ENCODE measurements at regions of chr2 and their contacts with region 1.

Region 1: DNA sequence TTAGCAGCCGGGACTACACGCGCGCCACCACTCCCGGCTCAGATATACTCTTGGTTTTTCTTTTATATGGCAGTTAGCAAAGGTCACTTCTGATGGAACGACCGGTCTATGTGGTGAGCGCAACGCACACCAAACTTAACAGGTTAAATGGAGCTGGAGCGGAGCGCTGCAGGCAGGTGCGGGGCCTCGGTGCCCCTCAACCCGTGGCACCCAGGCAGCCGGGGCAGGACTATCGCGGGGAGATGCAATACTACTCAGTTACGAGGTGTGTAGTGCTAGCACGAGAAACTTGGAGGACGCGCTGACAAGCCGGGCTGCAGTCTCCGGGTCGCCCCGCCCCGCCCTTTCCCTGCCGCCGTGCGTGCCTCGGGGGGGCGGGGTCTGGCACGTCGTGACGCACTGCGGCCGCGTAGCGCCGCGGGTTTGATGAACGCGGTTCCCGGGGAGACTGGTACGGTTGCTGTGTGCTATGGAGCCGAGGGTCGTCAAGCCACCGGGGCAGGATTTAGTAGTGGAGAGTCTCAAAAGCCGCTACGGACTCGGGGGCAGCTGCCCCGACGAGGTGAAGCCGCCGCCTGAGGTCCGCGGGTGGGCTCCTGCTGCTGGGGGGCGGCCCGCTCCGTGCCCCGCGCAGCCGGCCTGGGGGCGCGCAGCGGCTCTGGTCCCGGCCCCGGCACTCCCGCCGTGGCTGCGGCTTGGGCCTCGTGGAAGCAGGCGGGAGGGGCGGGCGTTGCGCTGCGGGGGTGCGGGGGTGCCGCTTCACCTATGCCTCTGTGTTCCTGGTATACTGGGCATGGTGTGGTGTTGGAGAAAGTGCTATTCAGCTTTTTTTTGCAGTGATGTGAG is at the start of gene CCDC138:
- DNase-seq: peak; percentile 86 to 93 (median 91)
- ATAC-seq: peak; percentile 98
- H3K4me3 ChIP-seq: peak within 1 kb of the TSS; percentile 88
- H3K4me3 Mint-ChIP-seq: peak within 1 kb of the TSS; percentile 88 to 100 (median 97)
- H3K27ac ChIP-seq: peak within 1 kb of the TSS; percentile 90
- H3K27ac Mint-ChIP-seq: peak within 1 kb of the TSS; percentile 69 to 99 (median 97)
- H3K4me1 ChIP-seq: peaks cover 6 to 13% of the 10 kb centered on the region in 2 donors
- H3K4me1 Mint-ChIP-seq: peaks cover 6 to 21% (median 17%) of the 10 kb centered on the region in 7 donors
- H3K27me3 ChIP-seq: no peaks in the 10 kb centered on the region
- H3K27me3 Mint-ChIP-seq: no peaks in the 10 kb centered on the region
- total RNA-seq, gene CCDC138: 2.7 to 10.5 (median 7.5) TPM

Region 2: DNA sequence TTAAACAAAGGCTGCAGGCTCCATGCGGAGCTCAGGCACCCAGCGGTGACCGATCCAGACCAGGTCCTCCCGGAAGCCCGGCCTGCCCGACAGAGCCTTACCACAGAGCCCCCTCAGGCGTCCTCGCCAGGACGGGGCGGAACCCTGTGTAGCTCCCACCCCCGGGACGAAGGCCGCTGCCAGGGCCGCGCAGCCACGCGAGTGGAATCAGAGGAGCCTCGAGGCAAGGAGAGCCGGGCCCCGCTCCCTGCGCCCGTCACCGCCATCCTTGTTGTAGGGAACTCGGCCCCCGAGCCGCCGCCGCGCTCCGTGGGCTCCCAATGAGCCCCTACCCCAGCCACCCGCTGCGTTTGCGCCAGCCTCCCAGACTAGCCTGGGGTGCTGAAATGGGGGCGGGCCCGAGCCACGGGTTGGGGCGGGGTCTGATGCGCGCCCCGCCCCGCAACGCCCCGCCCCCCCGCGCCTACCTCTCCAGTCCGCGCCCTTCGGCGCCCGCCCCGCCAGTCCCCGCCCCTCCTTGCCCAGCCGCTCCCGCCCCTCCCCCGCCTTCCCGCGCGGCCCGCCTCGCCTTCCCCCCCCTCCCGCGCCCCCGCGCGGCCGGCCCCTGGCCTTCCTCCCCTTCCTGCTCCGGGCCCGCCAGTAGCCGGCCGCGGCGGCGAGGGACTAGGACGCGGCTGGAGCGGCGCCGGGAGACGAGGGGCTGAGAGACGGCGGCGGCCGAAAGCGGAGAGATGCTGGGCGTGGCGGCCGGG is 252.6 kb before region 1 on chr2 and contains the start of gene LIMS1:
- CTCF ChIA-PET with region 1: no interaction called
- POLR2A ChIA-PET with region 1: no interaction called
- intact Hi-C with region 1: loop called (anchors 2 to 5 kb)
- DNase-seq: peak; percentile 69 to 85 (median 79)
- ATAC-seq: peak; percentile 98
- H3K4me3 ChIP-seq: peak within 1 kb of the TSS; percentile 93
- H3K4me3 Mint-ChIP-seq: peak within 1 kb of the TSS; percentile 86 to 99 (median 95)
- H3K27ac ChIP-seq: peak within 1 kb of the TSS; percentile 76
- H3K27ac Mint-ChIP-seq: peak within 1 kb of the TSS; percentile 34 to 96 (median 89)
- H3K4me1 ChIP-seq: peaks cover 3 to 9% of the 10 kb centered on the region in 2 donors
- H3K4me1 Mint-ChIP-seq: peaks cover 20 to 59% (median 28%) of the 10 kb centered on the region in 7 donors
- H3K27me3 ChIP-seq: no peaks in the 10 kb centered on the region
- H3K27me3 Mint-ChIP-seq: no peaks in the 10 kb centered on the region
- total RNA-seq, gene LIMS1: 25.3 to 75.3 (median 49.9) TPM

Region 3: DNA sequence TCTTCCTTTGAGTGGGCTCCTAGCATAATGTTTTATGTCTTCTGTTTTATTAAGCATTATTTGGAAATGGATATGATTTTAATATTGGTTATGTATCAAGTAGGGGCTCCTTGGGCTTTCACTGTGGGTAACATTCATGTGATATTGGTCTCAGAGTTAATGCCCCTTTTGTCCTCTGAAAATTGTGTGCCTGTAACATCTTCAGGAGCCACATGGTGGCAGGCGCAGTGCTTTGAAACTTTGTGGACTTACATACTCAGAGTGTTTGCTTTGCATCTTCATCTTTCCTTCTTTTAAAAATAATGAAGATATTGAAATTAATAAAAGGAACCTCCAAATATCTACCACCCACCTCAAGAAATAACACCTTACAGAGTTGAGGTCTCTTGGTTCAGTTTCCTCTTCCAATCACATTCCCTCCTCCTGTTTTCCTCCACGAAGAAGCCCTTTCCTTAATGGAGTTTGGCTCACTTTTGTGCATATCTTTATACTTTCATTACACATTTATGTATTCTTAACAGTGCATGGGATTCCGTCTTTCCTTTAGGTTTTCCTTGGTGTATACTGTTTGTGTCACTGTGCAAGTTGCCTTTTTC is 178.8 kb before region 1 on chr2:
- CTCF ChIA-PET with region 1: interaction called, 5 read pairs
- POLR2A ChIA-PET with region 1: no interaction called
- intact Hi-C with region 1: loop called in 1 of 2 experiments (anchors 5 kb)
- DNase-seq: peak in 7 of 9 donors; percentile 30 to 61 (median 53)
- ATAC-seq: peak; percentile 45
- H3K4me3 ChIP-seq: no peak overlapping the region
- H3K4me3 Mint-ChIP-seq: no peak overlapping the region
- H3K27ac ChIP-seq: no peak overlapping the region
- H3K27ac Mint-ChIP-seq: no peak overlapping the region
- H3K4me1 ChIP-seq: peaks cover 4 to 14% of the 10 kb centered on the region in 2 donors
- H3K4me1 Mint-ChIP-seq: peaks cover 20 to 68% (median 26%) of the 10 kb centered on the region in 7 donors
- H3K27me3 ChIP-seq: no peaks in the 10 kb centered on the region
- H3K27me3 Mint-ChIP-seq: no peaks in the 10 kb centered on the region

Region 4: GRCh38 chr2:108621087-108621559 is 165.5 kb before region 1 on chr2:
- CTCF ChIA-PET with region 1: no interaction called
- POLR2A ChIA-PET with region 1: no interaction called
- intact Hi-C with region 1: loop called (anchors 5 kb)
- DNase-seq: peak; percentile 32 to 80 (median 75)
- ATAC-seq: peak; percentile 97
- H3K4me3 ChIP-seq: peak overlapping the region; percentile 59
- H3K4me3 Mint-ChIP-seq: peak overlapping the region; percentile 87 to 96 (median 91)
- H3K27ac ChIP-seq: peak overlapping the region; percentile 74
- H3K27ac Mint-ChIP-seq: peak overlapping the region; percentile 91 to 97 (median 94)
- H3K4me1 ChIP-seq: peaks cover 36 to 64% of the 10 kb centered on the region in 2 donors
- H3K4me1 Mint-ChIP-seq: peaks cover 44 to 93% (median 84%) of the 10 kb centered on the region in 7 donors
- H3K27me3 ChIP-seq: no peaks in the 10 kb centered on the region
- H3K27me3 Mint-ChIP-seq: no peaks in the 10 kb centered on the region

Region 5: DNA sequence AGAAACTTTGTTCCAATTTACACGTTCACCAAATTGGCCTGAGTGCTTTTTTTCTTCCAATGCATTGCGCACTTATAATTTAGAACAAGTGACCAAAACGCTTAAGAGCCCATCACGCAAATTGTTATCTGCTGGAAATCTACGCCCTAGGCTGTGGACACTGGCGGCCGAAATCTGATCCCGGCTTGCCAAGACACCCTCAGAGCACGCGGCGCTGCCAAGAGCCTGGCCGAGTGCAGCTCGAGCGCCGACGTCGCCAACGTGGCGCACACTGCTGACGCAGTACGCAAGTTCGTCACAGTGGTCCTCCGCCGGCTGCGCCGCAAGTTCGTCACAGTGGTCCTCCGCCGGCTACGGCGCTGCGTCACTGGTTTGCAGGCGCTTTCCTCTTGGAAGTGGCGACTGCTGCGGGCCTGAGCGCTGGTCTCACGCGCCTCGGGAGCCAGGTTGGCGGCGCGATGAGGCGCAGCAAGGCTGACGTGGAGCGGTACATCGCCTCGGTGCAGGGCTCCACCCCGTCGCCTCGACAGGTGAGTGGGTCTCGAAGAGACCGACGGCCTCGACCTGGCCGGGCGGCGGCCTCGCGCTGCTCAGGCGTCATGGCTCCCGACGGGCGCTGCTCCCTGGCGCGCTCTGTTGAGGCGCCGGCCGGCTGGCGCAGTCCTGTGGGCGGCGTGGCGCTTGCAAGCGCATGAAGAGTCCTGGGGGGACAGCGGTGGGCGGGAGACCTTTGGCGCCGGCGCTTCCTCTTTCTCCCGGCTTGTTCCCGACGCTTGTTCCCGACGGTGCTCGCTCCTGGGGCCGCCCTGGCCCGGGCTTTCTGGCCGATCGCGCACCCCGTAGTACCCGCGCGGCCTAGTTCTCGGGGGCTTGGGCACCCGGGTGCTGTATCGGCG is 67.2 kb before region 1 on chr2 and contains the start of gene RANBP2:
- CTCF ChIA-PET with region 1: no interaction called
- POLR2A ChIA-PET with region 1: no interaction called
- intact Hi-C with region 1: loop called (anchors 1 kb)
- DNase-seq: peak; percentile 86 to 95 (median 93)
- ATAC-seq: peak; percentile 98
- H3K4me3 ChIP-seq: peak within 1 kb of the TSS; percentile 97
- H3K4me3 Mint-ChIP-seq: peak within 1 kb of the TSS; percentile 94 to 98 (median 97)
- H3K27ac ChIP-seq: peak within 1 kb of the TSS; percentile 96
- H3K27ac Mint-ChIP-seq: peak within 1 kb of the TSS; percentile 97 to 99 (median 99)
- H3K4me1 ChIP-seq: peaks cover 5 to 6% of the 10 kb centered on the region in 2 donors
- H3K4me1 Mint-ChIP-seq: peaks cover 14 to 43% (median 31%) of the 10 kb centered on the region in 7 donors
- H3K27me3 ChIP-seq: no peaks in the 10 kb centered on the region
- H3K27me3 Mint-ChIP-seq: no peaks in the 10 kb centered on the region
- total RNA-seq, gene RANBP2: 63.4 to 118 (median 88.6) TPM

Region 6: GRCh38 chr2:108833219-108833618 is 46.6 kb after region 1 on chr2:
- CTCF ChIA-PET with region 1: no interaction called
- POLR2A ChIA-PET with region 1: no interaction called
- intact Hi-C with region 1: no loop called
- DNase-seq: no peak
- ATAC-seq: no peak
- H3K4me3 ChIP-seq: no peak overlapping the region
- H3K4me3 Mint-ChIP-seq: peak overlapping the region in 1 of 10 donors; percentile 59
- H3K27ac ChIP-seq: no peak overlapping the region
- H3K27ac Mint-ChIP-seq: peak overlapping the region in 6 of 9 donors; percentile 3 to 85 (median 34)
- H3K4me1 ChIP-seq: peaks cover 0 to 4% of the 10 kb centered on the region in 2 donors
- H3K4me1 Mint-ChIP-seq: peaks cover 6 to 19% (median 10%) of the 10 kb centered on the region in 7 donors
- H3K27me3 ChIP-seq: no peaks in the 10 kb centered on the region
- H3K27me3 Mint-ChIP-seq: no peaks in the 10 kb centered on the region

Region 7: DNA sequence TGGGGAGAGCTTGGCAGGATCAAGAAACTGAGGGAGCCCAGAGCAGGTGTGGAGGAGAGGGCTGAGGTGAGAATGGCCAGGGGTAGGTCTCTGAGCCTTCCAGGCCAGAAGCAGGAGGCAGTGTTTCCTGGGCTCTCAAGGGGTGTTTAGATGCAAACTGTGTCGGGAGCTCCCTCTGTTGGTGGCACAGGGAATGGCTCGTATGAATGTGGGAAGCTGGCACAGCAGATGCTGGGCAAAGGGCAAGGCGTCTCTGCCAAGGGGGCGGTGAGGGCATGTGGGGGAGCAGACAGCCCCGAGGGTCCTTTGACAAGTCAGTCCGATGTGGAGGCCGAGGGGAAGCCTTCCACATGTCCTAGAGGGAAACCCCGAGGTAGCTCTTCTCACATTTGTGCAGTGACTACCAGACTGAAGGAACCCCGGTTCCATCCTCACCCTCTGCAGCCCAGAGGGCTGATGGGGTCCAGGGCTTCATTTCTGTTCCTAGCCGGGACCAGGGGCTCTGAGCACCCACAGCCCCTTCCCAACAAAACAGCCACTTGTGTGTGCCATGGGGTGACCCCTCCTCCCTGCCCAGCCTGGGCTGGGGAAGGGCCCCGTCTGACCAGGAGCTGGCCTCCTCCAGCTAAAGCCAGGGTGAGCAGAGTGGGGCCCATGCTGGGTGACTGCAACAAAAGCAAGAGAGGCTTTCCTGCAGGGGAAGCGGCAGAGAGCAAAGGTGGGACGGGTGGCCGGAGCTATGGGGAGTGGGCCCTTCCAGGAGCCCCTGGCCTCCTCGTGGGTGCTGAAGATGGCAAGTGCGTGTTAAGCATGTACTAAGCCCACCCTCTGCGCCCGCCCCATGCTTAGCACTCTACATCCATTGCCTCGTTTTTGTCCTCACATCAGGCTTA is 723.8 kb after region 1 on chr2:
- CTCF ChIA-PET with region 1: no interaction called
- POLR2A ChIA-PET with region 1: no interaction called
- intact Hi-C with region 1: loop called in 1 of 2 experiments (anchors 5 kb)
- DNase-seq: peak; percentile 56 to 83 (median 74)
- ATAC-seq: peak; percentile 80
- H3K4me3 ChIP-seq: no peak overlapping the region
- H3K4me3 Mint-ChIP-seq: no peak overlapping the region
- H3K27ac ChIP-seq: no peak overlapping the region
- H3K27ac Mint-ChIP-seq: peak overlapping the region in 4 of 9 donors; percentile 22 to 46 (median 44)
- H3K4me1 ChIP-seq: peaks cover 0 to 2% of the 10 kb centered on the region in 2 donors
- H3K4me1 Mint-ChIP-seq: peaks cover 0 to 7% (median 4%) of the 10 kb centered on the region in 7 donors
- H3K27me3 ChIP-seq: no peaks in the 10 kb centered on the region
- H3K27me3 Mint-ChIP-seq: no peaks in the 10 kb centered on the region

Region 8: GRCh38 chr2:109613922-109614714 is 827.5 kb after region 1 on chr2 and contains the starts of genes SEPTIN10 and SOWAHC:
- CTCF ChIA-PET with region 1: no interaction called
- POLR2A ChIA-PET with region 1: no interaction called
- intact Hi-C with region 1: loop called in 1 of 2 experiments (anchors 2 kb)
- DNase-seq: peak; percentile 71 to 86 (median 84)
- ATAC-seq: peak; percentile 96
- H3K4me3 ChIP-seq: peak within 1 kb of the TSS; percentile 64
- H3K4me3 Mint-ChIP-seq: peak within 1 kb of the TSS; percentile 85 to 96 (median 90)
- H3K27ac ChIP-seq: no peak within 1 kb of the TSS
- H3K27ac Mint-ChIP-seq: peak within 1 kb of the TSS in 8 of 9 donors; percentile 27 to 89 (median 80)
- H3K4me1 ChIP-seq: no peaks in the 10 kb centered on the region
- H3K4me1 Mint-ChIP-seq: peaks cover 0 to 26% (median 16%) of the 10 kb centered on the region in 7 donors
- H3K27me3 ChIP-seq: peaks cover 3 to 23% of the 10 kb centered on the region in 2 donors
- H3K27me3 Mint-ChIP-seq: peaks cover 58 to 83% (median 62%) of the 10 kb centered on the region in 5 donors
- total RNA-seq, gene SEPTIN10: 0.94 to 5.9 (median 2.0) TPM
- total RNA-seq, gene SOWAHC: 0.17 to 1.2 (median 0.94) TPM

Measured in naive thymus-derived CD4-positive, alpha-beta T cell (primary cell).